AG04450 (cell line): ENCODE measurements at regions of chr3 and their contacts with region 1.

Region 1: GRCh38 chr3:44338010-44338827 is at the start of gene TCAIM:
- DNase-seq: peak; percentile 93
- H3K4me3 ChIP-seq: peak within 1 kb of the TSS; percentile 91
- H3K27ac ChIP-seq: peak within 1 kb of the TSS; percentile 90
- H3K27me3 ChIP-seq: peaks cover 8% of the 10 kb centered on the region
- CTCF ChIP-seq: 0 out of 2 replicates have a peak, but pooled peaks have one; percentile 10
- polyA plus RNA-seq, gene TCAIM: 23.6 and 29.6 TPM in 2 replicates

Region 2: GRCh38 chr3:44323341-44323955 is 14.8 kb before region 1 on chr3:
- CTCF ChIA-PET with region 1: interaction called, 30 read pairs
- POLR2A ChIA-PET with region 1: no interaction called
- DNase-seq: peak; percentile 26
- H3K4me3 ChIP-seq: no peak overlapping the region
- H3K27ac ChIP-seq: no peak overlapping the region
- H3K27me3 ChIP-seq: no peaks in the 10 kb centered on the region
- CTCF ChIP-seq: peak; percentile 91